Left colon (tissue), 2 donors: ENCODE measurements at regions of chr2 and their contacts with region 1.

Region 1: DNA sequence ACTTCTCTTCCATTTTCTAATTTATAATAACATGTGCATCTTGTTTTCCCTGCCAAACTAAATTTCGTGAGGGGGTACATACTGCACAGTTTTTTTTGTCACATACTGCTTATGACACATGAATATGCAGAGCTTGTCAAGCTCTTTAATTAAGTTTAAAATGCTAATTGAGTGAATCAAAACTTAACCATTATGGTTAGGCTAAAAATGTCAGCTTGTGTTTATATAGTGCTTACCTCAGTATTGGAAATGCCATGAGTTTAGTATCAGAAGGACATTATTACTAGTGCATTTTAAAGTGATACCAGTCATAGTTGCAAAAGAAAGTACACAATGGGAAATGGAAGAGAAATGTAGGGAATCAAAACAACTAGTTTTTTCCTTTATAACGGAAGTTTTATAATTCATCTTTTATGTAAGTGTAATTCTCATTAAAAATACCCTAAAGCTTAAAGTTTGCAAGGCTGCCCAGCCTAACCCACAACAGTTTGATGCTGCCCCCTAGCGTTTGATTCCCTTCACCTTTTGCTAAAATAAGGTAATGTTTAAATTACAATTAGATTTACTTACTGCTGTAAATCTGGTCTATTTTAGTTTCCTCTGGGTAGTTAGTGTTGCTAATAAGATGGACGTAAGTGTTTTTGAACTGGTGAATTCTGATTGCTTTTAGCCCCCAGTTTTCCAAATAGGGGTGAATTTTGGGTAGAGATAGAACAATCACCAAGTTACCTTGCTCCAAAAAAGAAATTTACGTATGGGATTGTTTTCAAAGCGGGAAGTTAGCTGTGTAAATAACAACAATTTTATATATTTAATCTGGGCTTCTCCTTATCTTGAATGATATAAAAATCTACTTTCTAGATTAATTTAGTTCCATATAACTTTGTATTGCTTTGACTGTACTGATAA is 3.2 kb downstream of the SLC39A10 start:
- DNase-seq: peak; percentile 62 to 88
- ATAC-seq: no peak

Region 2: GRCh38 chr2:195505701-195506100 is 154.5 kb before region 1 on chr2:
- intact Hi-C with region 1: loop called in 1 of 2 experiments (anchors 10 kb)
- DNase-seq: no peak
- ATAC-seq: no peak

Region 3: DNA sequence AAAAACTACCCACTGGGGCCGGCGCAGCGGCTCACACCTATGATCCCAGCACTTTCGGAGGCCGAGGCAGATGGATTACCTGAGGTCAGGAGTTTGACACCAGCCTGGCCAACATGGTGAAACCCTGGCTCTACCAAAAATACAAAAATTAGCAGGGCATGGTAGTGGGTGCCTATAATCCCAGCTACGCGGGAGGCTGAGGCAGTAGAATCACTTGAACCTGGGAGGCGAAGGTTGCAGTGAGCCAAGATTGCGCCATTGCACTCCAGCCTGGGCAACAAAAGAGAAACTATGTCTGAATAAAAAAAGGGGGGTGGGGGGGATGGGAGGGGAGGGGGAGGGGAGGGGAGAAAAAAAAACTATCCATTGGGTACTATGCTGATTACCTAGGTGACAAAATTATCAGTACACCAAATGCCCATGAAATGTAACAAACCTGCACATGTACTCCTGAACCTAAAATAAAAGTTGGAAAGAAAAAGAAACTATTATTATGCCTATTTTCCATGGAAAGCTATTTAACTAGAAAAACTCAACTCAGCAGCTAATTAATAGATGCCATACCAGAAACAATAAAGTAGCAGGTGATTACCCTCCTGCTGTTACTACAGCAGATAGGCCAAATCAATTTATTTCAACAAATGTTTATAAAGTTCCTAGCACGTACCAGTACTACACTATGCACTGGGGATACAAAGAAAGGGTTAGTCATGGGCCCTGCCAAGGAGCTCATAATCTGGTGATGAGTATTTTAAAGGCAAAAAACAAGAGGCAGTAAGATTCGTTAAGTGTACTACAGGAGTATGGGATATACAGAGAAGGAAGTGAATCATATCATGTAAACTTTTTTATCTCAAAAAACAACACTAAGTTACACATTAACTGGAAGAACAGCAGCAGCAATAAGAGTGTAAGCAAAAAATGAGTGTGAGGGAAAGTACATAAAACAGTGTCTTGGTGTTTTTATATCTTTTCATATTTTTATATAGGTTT is 116.0 kb before region 1 on chr2:
- intact Hi-C with region 1: no loop called
- DNase-seq: no peak
- ATAC-seq: peak; percentile 92

Region 4: GRCh38 chr2:195575879-195576401 is 84.3 kb before region 1 on chr2:
- intact Hi-C with region 1: loop called in 1 of 2 experiments (anchors 10 kb)
- DNase-seq: no peak
- ATAC-seq: peak; percentile 52

Region 5: GRCh38 chr2:196068271-196069209 is 408.3 kb after region 1 on chr2 and contains the start of gene DNAH7:
- intact Hi-C with region 1: loop called in 1 of 2 experiments (anchors 5 kb)
- DNase-seq: peak; percentile 91 to 93
- ATAC-seq: peak; percentile 96
- total RNA-seq, gene DNAH7: 2.6 to 5.5 TPM